Dorsolateral prefrontal cortex (tissue), 120 donors: ENCODE measurements at regions of chr5 and their contacts with region 1.

Region 1: DNA sequence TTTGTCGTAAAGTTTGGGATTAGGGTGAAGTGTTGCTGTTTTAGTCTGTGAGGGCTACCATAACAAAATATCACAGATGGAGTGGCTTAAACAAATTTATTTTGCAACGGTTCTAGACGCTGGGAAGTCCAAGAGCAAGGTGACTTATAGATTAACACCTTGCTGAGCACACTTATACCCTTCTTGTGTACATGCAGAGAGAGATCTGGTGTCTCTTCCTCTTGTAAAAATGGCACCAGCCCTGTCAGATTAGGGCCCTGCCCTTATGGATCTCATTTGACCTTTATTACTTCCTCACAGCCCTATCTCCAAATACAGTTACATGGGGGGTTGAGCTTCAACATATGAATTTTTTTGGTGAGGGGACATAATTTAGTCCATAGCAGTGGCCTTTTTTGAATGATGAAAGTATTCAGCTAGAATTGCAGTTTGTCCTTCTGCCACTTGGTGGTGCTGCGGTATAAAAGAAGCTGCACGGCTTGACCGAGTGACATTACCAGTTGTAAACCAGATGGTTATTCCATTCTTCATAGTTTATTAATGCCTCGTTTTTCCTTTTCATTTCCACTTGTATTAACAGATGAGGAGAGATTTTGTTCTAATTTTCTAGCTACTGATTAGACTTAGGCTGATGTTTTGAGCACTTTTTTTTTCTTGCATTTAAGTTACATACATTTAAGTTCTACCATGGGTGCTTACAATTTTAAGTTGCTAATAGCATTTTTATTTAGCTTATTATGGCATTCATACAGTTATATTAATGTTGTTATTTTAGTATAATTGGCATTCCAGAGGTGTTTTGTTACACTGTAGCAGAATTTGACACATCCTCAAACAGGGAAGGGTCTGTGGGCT is 19.4 kb downstream of the DCP2 start:
- DNase-seq: peak in 9 of 10 donors; percentile 50 to 86 (median 69)
- H3K4me3 ChIP-seq: no peak overlapping the region
- H3K27ac ChIP-seq: no peak overlapping the region
- H3K27me3 ChIP-seq: no peaks in the 10 kb centered on the region
- CTCF ChIP-seq: peak; percentile 79 to 98 (median 92)

Region 2: GRCh38 chr5:112625689-112626438 is 370.1 kb before region 1 on chr5:
- intact Hi-C with region 1: no loop called
- DNase-seq: no peak
- H3K4me3 ChIP-seq: no peak overlapping the region
- H3K27ac ChIP-seq: peak overlapping the region in 2 of 59 donors; percentile 6 to 8
- H3K27me3 ChIP-seq: peaks cover 0 to 4% (median 0%) of the 10 kb centered on the region in 45 donors
- CTCF ChIP-seq: no peak

Region 3: DNA sequence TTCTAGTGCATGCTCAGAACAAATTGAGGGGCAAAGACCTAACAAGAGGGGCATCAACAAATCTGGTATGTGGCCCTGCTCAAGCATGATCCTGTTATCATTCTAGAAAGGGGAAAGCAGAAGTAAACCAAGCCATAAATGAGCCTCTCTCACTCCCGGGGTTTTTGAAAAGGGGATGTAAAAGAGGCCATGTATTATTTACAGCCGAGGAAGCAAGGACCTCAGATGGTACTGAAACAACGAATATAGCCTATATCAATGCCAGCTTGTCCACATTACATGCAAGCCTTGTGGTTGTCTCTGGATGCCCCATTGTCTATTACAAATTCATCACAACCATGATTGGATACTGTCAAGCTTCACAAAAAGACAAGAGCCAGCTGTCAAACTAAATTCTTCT is 191.9 kb after region 1 on chr5:
- intact Hi-C with region 1: no loop called
- DNase-seq: no peak
- H3K4me3 ChIP-seq: no peak overlapping the region
- H3K27ac ChIP-seq: no peak overlapping the region
- H3K27me3 ChIP-seq: no peaks in the 10 kb centered on the region
- CTCF ChIP-seq: no peak

Region 4: GRCh38 chr5:113330533-113331208 is 334.7 kb after region 1 on chr5:
- intact Hi-C with region 1: loop called in 1 of 2 experiments (anchors 5 kb)
- DNase-seq: peak in 1 of 10 donors; percentile 34
- H3K4me3 ChIP-seq: peak overlapping the region in 4 of 59 donors; percentile 4 to 27 (median 16)
- H3K27ac ChIP-seq: peak overlapping the region in 1 of 59 donors; percentile 27
- H3K27me3 ChIP-seq: no peaks in the 10 kb centered on the region
- CTCF ChIP-seq: peak in 52 of 56 donors; percentile 2 to 75 (median 44)